AG04450 (cell line): ENCODE measurements at regions of chr6 and their contacts with region 1.

Region 1: GRCh38 chr6:7238900-7239589 is 74.0 kb downstream of the SSR1 start:
- DNase-seq: no peak
- H3K4me3 ChIP-seq: no peak overlapping the region
- H3K27ac ChIP-seq: no peak overlapping the region
- H3K27me3 ChIP-seq: no peaks in the 10 kb centered on the region
- CTCF ChIP-seq: peak; percentile 58

Region 2: DNA sequence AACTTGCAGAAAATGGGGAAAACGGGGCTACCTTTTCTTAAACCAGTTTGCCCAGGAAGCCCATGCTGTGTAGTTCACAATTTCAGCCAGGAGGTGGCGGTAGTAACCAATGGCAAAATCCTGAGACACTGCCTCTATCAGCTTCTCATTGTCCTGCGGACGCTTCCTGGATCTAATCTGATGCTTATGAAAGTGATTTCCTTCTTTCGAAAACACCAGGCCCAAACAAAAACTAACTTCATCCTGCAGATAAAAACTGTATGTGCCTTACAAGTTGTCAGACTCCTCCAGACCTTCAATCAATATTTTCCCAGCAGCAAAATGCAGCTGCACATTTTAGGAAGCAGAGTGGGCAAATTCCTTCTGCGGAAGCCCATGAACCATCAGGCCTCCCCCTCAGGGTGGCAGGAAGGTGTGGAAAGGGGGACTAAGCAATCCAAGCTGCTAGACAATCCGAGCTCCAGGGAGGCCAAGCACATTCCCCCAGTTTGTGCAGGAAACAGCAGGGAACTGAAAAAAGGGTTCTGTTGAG is 562.1 kb before region 1 on chr6:
- CTCF ChIA-PET with region 1: interaction called, 26 read pairs
- POLR2A ChIA-PET with region 1: no interaction called
- DNase-seq: peak; percentile 45
- H3K4me3 ChIP-seq: no peak overlapping the region
- H3K27ac ChIP-seq: no peak overlapping the region
- H3K27me3 ChIP-seq: peaks cover 3% of the 10 kb centered on the region
- CTCF ChIP-seq: peak; percentile 97

Region 3: DNA sequence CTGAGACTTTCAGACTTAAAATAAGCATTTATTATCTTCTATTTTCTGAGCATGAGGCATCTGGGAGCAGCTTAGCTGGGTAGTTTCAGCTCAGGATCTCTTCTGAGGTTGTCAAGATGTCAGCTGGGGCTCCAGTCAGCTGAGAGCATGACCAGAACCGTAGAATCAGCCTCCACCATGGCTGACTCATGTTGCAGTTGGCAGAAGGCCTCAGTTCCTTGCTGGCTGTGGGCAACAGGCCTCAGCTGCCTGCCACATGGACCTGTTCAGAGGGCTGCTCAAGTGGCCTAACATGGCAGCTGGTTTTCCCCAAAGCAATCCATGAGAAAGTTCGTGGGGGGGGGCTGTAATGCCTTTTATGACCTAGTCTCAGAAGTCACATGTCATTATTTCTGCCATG is 508.2 kb before region 1 on chr6:
- CTCF ChIA-PET with region 1: interaction called, 95 read pairs
- POLR2A ChIA-PET with region 1: no interaction called
- DNase-seq: peak; percentile 82
- H3K4me3 ChIP-seq: no peak overlapping the region
- H3K27ac ChIP-seq: peak overlapping the region; percentile 49
- H3K27me3 ChIP-seq: peaks cover 2% of the 10 kb centered on the region
- CTCF ChIP-seq: no peak

Region 4: DNA sequence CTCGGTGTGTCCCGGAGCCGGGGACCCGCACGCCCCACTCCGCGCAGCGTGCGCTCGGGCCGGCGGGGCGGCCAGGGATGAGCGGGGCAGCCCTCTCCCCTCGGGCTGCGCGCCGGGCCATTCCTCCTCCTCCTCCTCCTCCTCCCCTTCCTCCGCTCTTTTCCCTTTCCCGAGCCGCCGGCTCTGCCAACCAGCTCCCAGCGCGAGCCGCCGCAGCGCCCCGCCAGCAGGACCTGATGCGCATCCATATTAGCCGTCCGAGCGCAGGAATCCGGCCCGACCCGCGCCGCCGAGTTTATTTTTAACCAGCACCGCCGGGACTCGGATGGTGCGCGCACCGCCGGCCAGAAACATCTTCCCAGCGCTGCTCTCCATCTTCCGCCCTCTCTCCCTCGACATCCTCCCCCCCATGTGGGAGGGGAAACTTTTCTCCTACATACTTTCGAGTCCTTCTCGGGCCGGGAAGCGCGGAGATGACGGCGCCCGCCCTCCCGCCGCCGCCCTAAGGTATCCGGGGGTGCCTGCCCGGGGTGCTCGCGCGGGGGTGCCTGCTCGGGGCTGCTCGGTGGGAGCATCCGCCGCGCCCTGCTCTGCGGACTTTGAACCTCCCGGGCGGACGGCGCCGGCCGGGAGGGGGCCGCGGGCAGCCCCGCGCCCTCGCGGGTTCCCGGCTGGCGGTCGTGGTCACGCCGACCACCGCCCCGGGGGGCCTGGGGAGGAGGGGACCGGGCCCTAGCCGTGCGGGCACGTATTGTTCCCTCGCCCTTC is 130.7 kb before region 1 on chr6:
- CTCF ChIA-PET with region 1: interaction called, 16 read pairs
- POLR2A ChIA-PET with region 1: no interaction called
- DNase-seq: no peak
- H3K4me3 ChIP-seq: peak overlapping the region; percentile 88
- H3K27ac ChIP-seq: peak overlapping the region; percentile 87
- H3K27me3 ChIP-seq: no peaks in the 10 kb centered on the region
- CTCF ChIP-seq: no peak

Region 5: DNA sequence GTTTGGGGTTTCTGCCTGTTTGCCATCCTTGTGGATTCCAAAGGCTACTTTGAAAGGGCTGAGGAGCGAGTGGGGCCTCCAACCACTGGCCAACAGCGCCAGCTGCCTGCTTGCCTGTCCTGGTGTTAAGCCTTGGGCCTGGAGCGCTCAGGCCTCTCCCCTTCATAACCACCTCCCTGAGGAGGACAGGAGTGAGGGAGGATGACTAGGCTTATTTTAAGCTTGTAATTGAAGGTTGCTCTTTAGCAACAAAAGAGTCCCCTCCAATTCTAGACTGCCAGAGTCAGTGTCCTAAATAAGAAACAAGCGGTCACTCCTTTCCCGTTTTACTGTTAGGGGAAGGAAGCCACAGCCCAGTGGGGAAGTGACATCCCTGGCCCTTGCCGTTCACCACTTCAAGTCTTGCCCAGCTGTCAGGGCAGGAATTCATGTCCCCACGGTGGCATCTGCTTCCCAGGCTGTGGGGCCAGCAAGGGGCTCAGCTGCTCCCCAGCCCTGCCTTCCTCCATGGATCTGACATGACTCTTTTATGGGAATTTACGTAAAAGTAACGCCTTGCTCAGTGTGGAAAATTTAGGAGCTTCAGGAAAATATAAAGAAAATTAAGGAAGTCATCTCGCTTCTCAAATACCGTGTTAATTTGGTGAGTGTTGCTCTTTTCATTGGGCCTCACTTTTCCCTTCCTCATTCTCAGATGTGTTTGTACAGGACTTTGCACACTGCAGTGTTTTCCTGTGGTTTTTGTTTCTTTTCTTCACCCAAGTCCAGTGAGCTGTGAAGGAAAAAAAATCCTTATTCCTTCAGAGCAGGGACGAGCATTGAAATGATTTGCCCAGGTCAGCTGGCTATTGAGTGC is 16.2 kb after region 1 on chr6:
- CTCF ChIA-PET with region 1: interaction called, 27 read pairs
- POLR2A ChIA-PET with region 1: no interaction called
- DNase-seq: no peak
- H3K4me3 ChIP-seq: no peak overlapping the region
- H3K27ac ChIP-seq: no peak overlapping the region
- H3K27me3 ChIP-seq: no peaks in the 10 kb centered on the region
- CTCF ChIP-seq: no peak

Region 6: DNA sequence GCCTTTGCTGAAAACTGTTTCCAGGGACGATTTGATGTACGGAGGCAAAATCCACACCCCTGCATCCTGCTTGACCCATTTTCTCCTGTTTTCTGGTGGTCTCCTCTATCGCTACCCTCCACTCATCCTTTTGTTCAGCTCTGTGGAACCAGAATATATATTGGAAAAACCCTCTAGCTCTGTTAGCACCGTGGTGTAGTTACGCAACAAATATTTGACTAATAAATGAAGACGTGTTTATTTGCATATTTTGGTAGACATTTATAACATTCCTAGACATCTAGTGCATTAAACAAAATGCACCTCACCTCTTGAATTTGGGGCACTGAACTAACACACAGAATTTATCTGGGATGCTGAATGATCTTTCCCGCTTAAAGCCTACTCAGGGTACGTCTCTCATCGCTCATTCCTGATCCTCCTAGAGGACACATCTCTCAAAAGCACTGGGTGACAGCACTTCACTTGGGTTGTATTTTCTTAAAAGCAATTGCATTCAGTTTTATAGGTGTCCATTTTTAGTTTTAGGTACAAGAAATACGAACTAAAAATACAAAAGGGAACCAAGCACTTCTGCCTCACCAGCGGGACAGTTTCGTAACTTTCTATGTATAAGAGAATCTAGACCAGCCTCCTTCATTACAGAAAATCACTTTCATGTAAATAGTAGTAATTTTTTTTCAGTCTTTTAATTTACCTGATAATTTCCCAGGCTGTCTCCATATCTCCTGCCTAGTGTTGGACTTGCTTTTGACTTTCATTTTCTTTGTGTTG is 410.2 kb after region 1 on chr6:
- CTCF ChIA-PET with region 1: no interaction called
- POLR2A ChIA-PET with region 1: no interaction called
- DNase-seq: no peak
- H3K4me3 ChIP-seq: no peak overlapping the region
- H3K27ac ChIP-seq: no peak overlapping the region
- H3K27me3 ChIP-seq: peaks cover 2% of the 10 kb centered on the region
- CTCF ChIP-seq: no peak